ENCODE measurements at regions of chr10 and their contacts with region 1.

Region 1: GRCh38 chr10:72331601-72332422 is 22.9 kb downstream of the DNAJB12 start:
- DNase-seq: peak in 1 of 2 experiments; percentile 72
- H3K4me3 ChIP-seq: no peak overlapping the region
- H3K4me1 ChIP-seq: peaks cover 5% of the 10 kb centered on the region
- H3K27me3 ChIP-seq: no peaks in the 10 kb centered on the region

Region 2: GRCh38 chr10:71319042-71319799 is 1012.6 kb before region 1 on chr10 and contains the start of gene SLC29A3:
- in situ Hi-C with region 1: loop called (anchors 10 kb)
- DNase-seq: peak; percentile 82 to 86
- H3K4me3 ChIP-seq: peak within 1 kb of the TSS; percentile 55
- H3K4me1 ChIP-seq: no peaks in the 10 kb centered on the region; the same call in none of the 2 replicates
- H3K27me3 ChIP-seq: no peaks in the 10 kb centered on the region

Region 3: DNA sequence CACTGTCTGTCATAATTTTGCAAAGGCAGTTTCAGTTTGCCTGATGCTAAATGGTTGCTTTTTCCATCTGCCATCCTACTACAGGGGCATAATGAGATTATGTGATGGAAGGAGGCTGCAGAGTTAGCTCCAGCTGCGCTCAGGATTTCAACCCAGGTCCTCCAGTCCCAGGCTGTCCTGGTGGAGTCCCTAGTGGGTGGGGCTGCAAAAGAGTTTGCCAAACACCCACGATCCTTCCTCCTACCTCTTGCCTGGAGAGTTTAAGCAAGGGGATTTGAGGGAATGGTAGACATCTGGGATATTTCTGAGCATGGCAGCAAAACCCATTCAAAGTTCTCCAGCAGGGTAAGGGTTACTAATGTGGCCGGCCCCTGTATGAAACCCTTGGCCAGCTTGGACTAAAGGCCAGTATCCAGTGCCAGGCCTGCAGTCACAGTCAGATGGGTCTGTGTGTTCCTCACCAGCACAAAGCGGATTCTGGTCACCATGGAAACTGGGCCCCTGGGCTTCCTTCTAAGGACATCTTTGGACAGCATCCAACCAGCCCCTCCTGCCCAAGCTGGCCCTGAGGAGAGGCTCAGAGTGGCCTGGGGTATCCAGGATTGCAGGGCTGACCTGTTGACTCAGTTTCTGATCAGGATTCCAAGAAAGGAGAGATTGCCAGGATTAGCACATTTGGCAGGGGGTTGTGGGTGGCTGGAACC is 410.3 kb before region 1 on chr10:
- in situ Hi-C with region 1: loop called (anchors 25 kb)
- DNase-seq: peak in 1 of 2 experiments; percentile 49
- H3K4me3 ChIP-seq: no peak overlapping the region
- H3K4me1 ChIP-seq: peaks cover 6% of the 10 kb centered on the region
- H3K27me3 ChIP-seq: peaks cover 3% of the 10 kb centered on the region; the same call in 1 of the 2 replicates

Region 4: GRCh38 chr10:73096449-73097304 is 764.9 kb after region 1 on chr10 and contains the start of gene P4HA1:
- in situ Hi-C with region 1: no loop called
- DNase-seq: peak; percentile 89 to 96
- H3K4me3 ChIP-seq: peak within 1 kb of the TSS; percentile 81
- H3K4me1 ChIP-seq: peaks cover 8% of the 10 kb centered on the region; the same call in 1 of the 2 replicates
- H3K27me3 ChIP-seq: no peaks in the 10 kb centered on the region

Measured in HAP-1 (cell line).